HepG2 (cell line): ENCODE measurements at regions of chr4 and their contacts with region 1.

Region 1: DNA sequence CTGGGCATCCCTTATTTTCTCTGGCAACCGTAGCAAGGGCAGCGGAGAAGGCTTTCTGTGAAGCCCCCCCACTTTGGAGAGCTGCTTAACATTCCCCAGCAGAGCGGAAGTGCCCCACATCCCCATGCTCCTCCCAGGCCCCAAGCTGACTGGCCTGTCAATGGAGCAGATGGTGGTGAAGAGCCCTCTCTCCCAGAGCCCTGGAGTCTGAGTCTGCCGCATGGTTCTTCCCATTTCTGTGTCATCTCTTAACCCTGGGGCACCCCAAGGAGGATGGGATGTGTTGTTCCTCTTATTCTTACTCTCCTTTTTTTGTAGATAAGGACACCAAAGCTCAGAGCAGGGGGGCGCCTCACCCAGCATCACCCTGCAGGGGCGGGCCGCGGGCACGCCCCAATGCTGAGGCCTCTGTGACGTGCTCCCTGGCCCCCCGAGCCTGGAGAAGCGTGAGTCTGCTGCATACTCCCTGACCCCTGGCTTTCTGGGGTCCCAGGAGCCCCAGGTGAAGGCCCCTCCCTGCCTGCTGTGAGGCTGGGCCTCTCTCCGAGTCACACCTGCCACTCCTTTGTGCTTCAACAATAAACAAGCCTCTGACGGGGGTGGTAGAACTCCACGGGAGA is 35.9 kb downstream of the ADRA2C start:
- DNase-seq: no peak
- ATAC-seq: no peak
- H3K4me3 ChIP-seq: no peak overlapping the region; a peak in 1 of 6 replicates
- H3K27ac ChIP-seq: peak overlapping the region; percentile 73
- H3K4me1 ChIP-seq: peaks cover 59% of the 10 kb centered on the region
- H3K27me3 ChIP-seq: peaks cover 0 to 36% of the 10 kb centered on the region in 2 experiments; a peak in 3 of 5 replicates
- CTCF ChIP-seq: no peak
- EP300 ChIP-seq: no peak
- POLR2A ChIP-seq: no peak
- RAD21 ChIP-seq: no peak

Region 2: GRCh38 chr4:3442959-3443749 is 358.9 kb before region 1 on chr4:
- CTCF ChIA-PET with region 1: no interaction called
- POLR2A ChIA-PET with region 1: no interaction called
- in situ Hi-C with region 1: no loop called
- intact Hi-C with region 1: no loop called
- DNase-seq: peak; percentile 39
- ATAC-seq: peak; percentile 57
- H3K4me3 ChIP-seq: peak overlapping the region; percentile 52 to 71 (median 61); a peak in 5 of 6 replicates
- H3K27ac ChIP-seq: peak overlapping the region; percentile 89
- H3K4me1 ChIP-seq: peaks cover 39% of the 10 kb centered on the region
- H3K27me3 ChIP-seq: no peaks in the 10 kb centered on the region
- CTCF ChIP-seq: peak; percentile 99
- EP300 ChIP-seq: no peak
- POLR2A ChIP-seq: no peak
- RAD21 ChIP-seq: peak; percentile 98

Region 3: DNA sequence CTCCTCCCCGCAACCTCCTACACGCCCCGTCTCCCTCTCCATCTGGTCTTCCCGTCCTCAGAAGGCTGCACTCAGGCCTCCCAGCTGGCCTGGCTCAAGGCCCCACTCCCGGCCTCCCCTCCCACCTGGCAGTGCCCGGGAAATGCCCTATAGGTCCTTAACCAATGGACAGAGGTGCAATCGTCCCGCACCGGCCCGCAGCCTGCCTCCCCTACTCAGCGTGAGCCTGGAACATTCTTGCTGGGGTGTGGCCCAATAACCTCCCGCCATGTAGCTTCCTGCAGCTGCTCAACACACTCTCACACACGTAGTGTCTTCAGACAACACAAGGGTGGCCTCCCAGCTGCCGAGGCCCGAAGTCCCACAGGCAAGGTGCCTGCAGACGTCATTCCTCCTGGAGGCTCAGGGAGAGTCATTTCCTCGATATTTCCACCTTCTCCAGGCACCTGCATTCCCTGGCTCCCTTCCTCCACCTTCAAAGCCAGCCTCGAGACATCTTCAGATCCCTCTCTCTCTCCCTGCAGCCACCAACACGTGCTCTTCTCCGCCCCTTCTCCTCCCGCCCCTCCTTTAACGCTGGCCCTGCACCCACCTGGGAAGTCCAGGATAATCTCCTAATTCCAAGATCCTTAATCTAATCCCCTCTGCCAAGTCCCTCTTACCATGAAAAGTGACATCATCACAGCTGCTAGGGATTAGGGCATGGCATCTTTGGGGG is 20.3 kb after region 1 on chr4:
- CTCF ChIA-PET with region 1: no interaction called
- POLR2A ChIA-PET with region 1: interaction called, 70 read pairs
- in situ Hi-C with region 1: no loop called
- intact Hi-C with region 1: no loop called
- DNase-seq: peak; percentile 15
- ATAC-seq: no peak
- H3K4me3 ChIP-seq: no peak overlapping the region
- H3K27ac ChIP-seq: no peak overlapping the region
- H3K4me1 ChIP-seq: peaks cover 96% of the 10 kb centered on the region
- H3K27me3 ChIP-seq: no peaks in the 10 kb centered on the region
- CTCF ChIP-seq: no peak
- EP300 ChIP-seq: no peak
- POLR2A ChIP-seq: no peak
- RAD21 ChIP-seq: no peak

Region 4: DNA sequence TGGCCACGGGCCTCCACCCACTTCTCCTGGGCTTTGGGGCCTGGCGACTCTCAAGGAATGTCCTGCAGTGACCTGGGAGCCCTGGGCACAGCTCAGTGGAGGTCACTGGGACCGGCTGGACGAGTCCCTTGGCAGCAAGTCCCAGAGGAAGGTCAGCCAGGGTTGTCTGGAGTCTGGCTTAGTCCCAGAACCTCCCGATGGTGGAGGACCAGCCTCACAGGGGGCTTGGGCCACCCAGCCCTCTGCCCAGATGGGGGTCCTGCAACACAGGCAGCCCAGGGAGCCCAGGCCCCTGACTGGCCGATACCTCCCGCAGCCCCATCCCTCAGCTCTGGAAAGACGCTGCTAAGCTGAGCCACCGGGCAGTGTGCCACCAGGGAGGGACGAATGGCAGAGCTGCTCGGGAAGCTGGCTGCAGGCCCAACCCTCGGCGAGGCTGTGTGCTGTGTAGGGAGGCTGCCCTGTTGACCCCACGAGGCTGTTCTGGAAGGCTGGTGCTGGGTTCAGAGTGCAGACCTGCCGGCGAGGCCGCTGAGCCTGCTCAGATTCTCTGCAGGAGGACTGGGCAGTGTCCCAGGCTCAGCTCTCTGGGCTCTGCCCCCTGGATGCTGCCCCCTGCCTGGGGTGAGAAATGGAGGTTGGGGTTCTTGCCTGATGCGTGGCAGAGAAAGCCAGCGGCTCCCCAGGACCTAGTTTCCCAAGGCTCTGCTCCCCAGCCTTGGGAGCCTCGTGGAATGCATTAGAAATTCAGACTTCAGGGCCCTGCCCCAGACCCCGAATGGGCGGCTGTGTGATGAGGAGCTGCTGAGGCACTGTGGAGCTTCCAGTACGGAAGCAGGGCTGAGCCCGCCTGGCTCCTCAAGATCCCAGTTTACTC is 25.8 kb after region 1 on chr4:
- CTCF ChIA-PET with region 1: no interaction called
- POLR2A ChIA-PET with region 1: interaction called, 70 read pairs
- in situ Hi-C with region 1: no loop called
- intact Hi-C with region 1: no loop called
- DNase-seq: peak; percentile 85
- ATAC-seq: peak; percentile 75
- H3K4me3 ChIP-seq: peak overlapping the region; percentile 4 to 61 (median 5); a peak in 3 of 6 replicates
- H3K27ac ChIP-seq: peak overlapping the region; percentile 91
- H3K4me1 ChIP-seq: peaks cover 100% of the 10 kb centered on the region
- H3K27me3 ChIP-seq: no peaks in the 10 kb centered on the region
- CTCF ChIP-seq: peak; percentile 47
- EP300 ChIP-seq: peak in 1 of 2 experiments; percentile 54; a peak in 1 of 4 replicates
- POLR2A ChIP-seq: peak in 1 of 2 experiments; percentile 38; a peak in 1 of 4 replicates
- RAD21 ChIP-seq: peak; percentile 56

Region 5: GRCh38 chr4:3836756-3837601 is 34.9 kb after region 1 on chr4:
- CTCF ChIA-PET with region 1: no interaction called
- POLR2A ChIA-PET with region 1: interaction called, 48 read pairs
- in situ Hi-C with region 1: no loop called
- intact Hi-C with region 1: no loop called
- DNase-seq: peak; percentile 99
- ATAC-seq: peak; percentile 89
- H3K4me3 ChIP-seq: no peak overlapping the region
- H3K27ac ChIP-seq: peak overlapping the region; percentile 95
- H3K4me1 ChIP-seq: peaks cover 79% of the 10 kb centered on the region
- H3K27me3 ChIP-seq: no peaks in the 10 kb centered on the region
- CTCF ChIP-seq: peak; percentile 56
- EP300 ChIP-seq: peak; percentile 97 to 98; a peak in 3 of 4 replicates
- POLR2A ChIP-seq: no peak
- RAD21 ChIP-seq: 0 out of 2 replicates have a peak, but pooled peaks have one; percentile 49